ENCODE measurements at regions of chr10 and their contacts with region 1.

Region 1: DNA sequence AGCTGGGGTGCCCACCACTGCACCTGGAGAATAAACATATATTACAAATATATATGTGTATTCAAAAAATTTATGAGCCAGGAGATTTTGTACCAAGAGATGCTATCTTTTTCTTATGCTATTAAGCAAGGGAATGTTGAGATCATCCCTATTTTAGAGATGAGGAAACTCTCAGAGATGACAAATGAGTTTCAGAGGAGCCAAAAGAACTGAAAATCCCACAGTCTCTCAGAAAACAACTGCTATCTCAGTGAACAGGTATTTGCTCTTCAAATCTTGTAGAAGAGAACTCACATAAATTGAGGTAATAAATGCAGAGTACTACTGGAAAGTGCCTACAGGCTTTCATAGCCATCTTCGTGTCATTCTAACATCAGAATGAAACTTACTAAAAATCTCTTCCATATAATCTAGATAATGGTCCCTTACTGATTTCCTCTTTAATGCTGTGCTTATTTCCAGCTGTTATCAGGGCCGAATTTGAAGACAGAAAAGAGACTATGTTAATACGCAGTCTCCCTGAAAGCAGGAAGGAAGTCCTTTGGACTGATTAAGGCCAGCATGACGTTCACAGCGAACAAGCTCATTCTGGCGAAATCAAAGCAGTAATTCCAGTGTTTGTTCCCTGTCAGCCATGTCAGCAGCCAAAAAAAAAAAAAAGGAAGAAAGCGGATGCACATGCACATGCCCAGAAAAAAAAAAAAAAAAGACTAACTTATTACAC is 29.4 kb upstream of the ANAPC16 start:
- DNase-seq: no peak
- H3K4me3 ChIP-seq: no peak overlapping the region
- H3K27ac ChIP-seq: no peak overlapping the region
- H3K4me1 ChIP-seq: no peaks in the 10 kb centered on the region
- H3K27me3 ChIP-seq: no peaks in the 10 kb centered on the region
- CTCF ChIP-seq: no peak

Region 2: GRCh38 chr10:72133517-72133916 is 52.9 kb before region 1 on chr10:
- CTCF ChIA-PET with region 1: no interaction called
- POLR2A ChIA-PET with region 1: interaction called, 18 read pairs
- intact Hi-C with region 1: no loop called
- DNase-seq: peak in 1 of 2 experiments; percentile 39
- H3K4me3 ChIP-seq: no peak overlapping the region
- H3K27ac ChIP-seq: no peak overlapping the region
- H3K4me1 ChIP-seq: peaks cover 16% of the 10 kb centered on the region; the same call in 1 of the 2 replicates
- H3K27me3 ChIP-seq: no peaks in the 10 kb centered on the region
- CTCF ChIP-seq: no peak